A549 (cell line): ENCODE measurements at regions of chr11 and their contacts with region 1.

Region 1: GRCh38 chr11:36478700-36479329 is 31.3 kb downstream of the TRAF6 start:
- DNase-seq: peak; percentile 35 to 60
- ATAC-seq: peak; percentile 91 to 92
- H3K4me3 ChIP-seq: no peak overlapping the region
- H3K27ac ChIP-seq: no peak overlapping the region
- H3K4me1 ChIP-seq: no peaks in the 10 kb centered on the region
- CTCF ChIP-seq: peak; percentile 79
- EP300 ChIP-seq: no peak
- POLR2A ChIP-seq: no peak
- RAD21 ChIP-seq: peak; percentile 91

Region 2: DNA sequence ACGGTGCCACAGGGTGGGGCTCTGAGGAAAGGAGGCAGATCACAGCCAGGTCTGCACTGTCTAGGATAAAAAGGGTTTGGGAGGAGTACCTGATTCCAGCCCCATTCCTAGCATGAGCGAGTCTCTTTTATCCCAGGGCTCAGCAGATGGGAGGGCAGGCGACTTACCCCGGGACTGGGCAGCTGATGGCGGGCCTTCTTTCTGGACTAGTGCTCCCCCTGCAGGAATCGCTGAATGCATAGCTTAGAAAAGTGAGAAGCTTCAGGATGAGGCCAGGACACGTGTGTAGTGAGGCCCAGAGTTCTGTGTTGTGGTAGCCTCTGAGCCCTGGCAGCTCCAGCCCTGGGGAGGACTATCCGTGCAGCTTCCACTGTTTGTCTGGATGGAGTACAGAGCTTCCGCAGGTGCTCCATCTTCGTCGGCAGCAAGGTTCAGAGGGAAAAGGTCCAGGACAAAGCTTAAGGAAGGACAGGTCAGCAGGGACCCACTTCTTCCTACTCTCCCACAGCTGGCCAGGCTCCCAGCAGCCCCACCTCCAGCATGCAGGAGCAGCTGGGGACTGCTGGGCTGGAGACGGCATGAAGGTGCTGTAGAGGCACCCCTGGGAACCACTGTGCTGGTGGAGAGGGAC is 220.0 kb before region 1 on chr11:
- CTCF ChIA-PET with region 1: interaction called, 11 read pairs
- POLR2A ChIA-PET with region 1: no interaction called
- DNase-seq: peak; percentile 60 to 68
- ATAC-seq: peak; percentile 90 to 97
- H3K4me3 ChIP-seq: no peak overlapping the region
- H3K27ac ChIP-seq: 0 out of 6 replicates have a peak overlapping the region, but pooled peaks of 1 of the 2 experiments have one; percentile 6
- H3K4me1 ChIP-seq: 0 out of 3 replicates have a peak, but pooled peaks cover 4% of the 10 kb centered on the region
- CTCF ChIP-seq: peak; percentile 68
- EP300 ChIP-seq: no peak
- POLR2A ChIP-seq: no peak
- RAD21 ChIP-seq: peak; percentile 78 to 82

Region 3: GRCh38 chr11:36278531-36279282 is 200.1 kb before region 1 on chr11:
- CTCF ChIA-PET with region 1: interaction called, 13 read pairs
- POLR2A ChIA-PET with region 1: no interaction called
- DNase-seq: no peak
- ATAC-seq: peak in 1 of 2 experiments; percentile 55; a peak in 3 of 6 replicates
- H3K4me3 ChIP-seq: no peak overlapping the region
- H3K27ac ChIP-seq: no peak overlapping the region
- H3K4me1 ChIP-seq: no peaks in the 10 kb centered on the region
- CTCF ChIP-seq: no peak
- EP300 ChIP-seq: no peak
- POLR2A ChIP-seq: no peak
- RAD21 ChIP-seq: no peak

Region 4: GRCh38 chr11:36300651-36301050 is 178.2 kb before region 1 on chr11:
- CTCF ChIA-PET with region 1: interaction called, 182 read pairs
- POLR2A ChIA-PET with region 1: no interaction called
- DNase-seq: no peak
- ATAC-seq: no peak
- H3K4me3 ChIP-seq: no peak overlapping the region
- H3K27ac ChIP-seq: no peak overlapping the region
- H3K4me1 ChIP-seq: peaks cover 11% of the 10 kb centered on the region; the same call in 1 of the 3 replicates
- CTCF ChIP-seq: no peak
- EP300 ChIP-seq: no peak
- POLR2A ChIP-seq: no peak
- RAD21 ChIP-seq: no peak

Region 5: DNA sequence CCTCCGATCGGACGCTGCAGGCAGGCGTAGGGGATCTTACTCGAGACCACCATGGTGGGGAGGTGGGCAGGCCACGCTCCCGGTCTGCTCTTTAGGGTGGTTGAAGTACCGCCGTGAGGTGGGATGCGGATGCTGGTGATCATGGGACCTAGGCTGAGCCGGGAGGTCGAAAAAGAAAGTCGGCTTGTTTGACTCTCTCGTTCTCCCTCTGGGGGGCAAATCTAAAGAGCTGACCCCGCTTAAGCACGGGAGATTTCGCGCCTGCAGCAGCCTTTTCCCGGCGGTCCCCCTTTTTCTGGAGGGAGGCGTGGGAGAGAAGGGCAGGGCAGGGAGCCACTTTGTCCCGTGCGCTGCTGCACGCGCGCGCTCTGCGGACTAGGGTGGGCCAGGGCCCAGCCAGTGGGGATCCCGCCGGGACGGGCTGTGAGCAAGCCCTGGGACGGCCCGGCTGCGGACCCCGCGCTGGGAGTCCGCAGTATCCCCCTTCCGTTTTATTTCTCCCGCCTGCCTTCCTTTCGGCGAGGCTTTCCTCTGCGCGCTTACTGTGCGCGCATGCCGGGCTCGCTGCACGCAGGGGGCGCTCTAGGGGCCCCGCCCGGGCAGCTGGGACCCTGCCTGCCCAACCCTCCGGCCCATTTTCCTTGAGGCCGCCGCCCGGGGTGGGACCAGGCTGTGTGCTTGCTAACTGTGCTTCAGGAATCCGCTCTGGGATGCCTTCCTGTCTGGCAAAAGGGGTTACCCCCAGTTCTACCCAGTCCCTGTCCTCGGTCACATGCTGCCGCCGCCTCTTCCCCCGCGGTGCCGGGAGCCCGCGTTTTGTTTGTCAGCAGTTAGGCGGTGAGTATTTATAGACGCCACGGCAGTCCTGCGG is 101.7 kb before region 1 on chr11:
- CTCF ChIA-PET with region 1: interaction called, 51 read pairs
- POLR2A ChIA-PET with region 1: no interaction called
- DNase-seq: peak; percentile 52 to 56
- ATAC-seq: peak; percentile 82 to 93
- H3K4me3 ChIP-seq: peak overlapping the region; percentile 70
- H3K27ac ChIP-seq: peak overlapping the region; percentile 61 to 84
- H3K4me1 ChIP-seq: peaks cover 17% of the 10 kb centered on the region
- CTCF ChIP-seq: peak; percentile 78
- EP300 ChIP-seq: no peak
- POLR2A ChIP-seq: 0 out of 2 replicates have a peak, but pooled peaks have one; percentile 22
- RAD21 ChIP-seq: peak; percentile 30 to 62; a peak in 4 of 5 replicates

Region 6: GRCh38 chr11:36460220-36460619 is 18.6 kb before region 1 on chr11:
- CTCF ChIA-PET with region 1: interaction called, 19 read pairs
- POLR2A ChIA-PET with region 1: no interaction called
- DNase-seq: no peak
- ATAC-seq: no peak
- H3K4me3 ChIP-seq: no peak overlapping the region
- H3K27ac ChIP-seq: no peak overlapping the region
- H3K4me1 ChIP-seq: peaks cover 11% of the 10 kb centered on the region
- CTCF ChIP-seq: no peak
- EP300 ChIP-seq: no peak
- POLR2A ChIP-seq: no peak
- RAD21 ChIP-seq: no peak